HEK293 (cell line): ENCODE measurements at regions of chr19 and their contacts with region 1.

Region 1: GRCh38 chr19:19385108-19385899 is 20.2 kb upstream of the GATAD2A start:
- H3K4me3 ChIP-seq: peak overlapping the region; percentile 89
- H3K27ac ChIP-seq: peak overlapping the region; percentile 90
- H3K4me1 ChIP-seq: peaks cover 5% of the 10 kb centered on the region
- CTCF ChIP-seq: no peak

Region 2: DNA sequence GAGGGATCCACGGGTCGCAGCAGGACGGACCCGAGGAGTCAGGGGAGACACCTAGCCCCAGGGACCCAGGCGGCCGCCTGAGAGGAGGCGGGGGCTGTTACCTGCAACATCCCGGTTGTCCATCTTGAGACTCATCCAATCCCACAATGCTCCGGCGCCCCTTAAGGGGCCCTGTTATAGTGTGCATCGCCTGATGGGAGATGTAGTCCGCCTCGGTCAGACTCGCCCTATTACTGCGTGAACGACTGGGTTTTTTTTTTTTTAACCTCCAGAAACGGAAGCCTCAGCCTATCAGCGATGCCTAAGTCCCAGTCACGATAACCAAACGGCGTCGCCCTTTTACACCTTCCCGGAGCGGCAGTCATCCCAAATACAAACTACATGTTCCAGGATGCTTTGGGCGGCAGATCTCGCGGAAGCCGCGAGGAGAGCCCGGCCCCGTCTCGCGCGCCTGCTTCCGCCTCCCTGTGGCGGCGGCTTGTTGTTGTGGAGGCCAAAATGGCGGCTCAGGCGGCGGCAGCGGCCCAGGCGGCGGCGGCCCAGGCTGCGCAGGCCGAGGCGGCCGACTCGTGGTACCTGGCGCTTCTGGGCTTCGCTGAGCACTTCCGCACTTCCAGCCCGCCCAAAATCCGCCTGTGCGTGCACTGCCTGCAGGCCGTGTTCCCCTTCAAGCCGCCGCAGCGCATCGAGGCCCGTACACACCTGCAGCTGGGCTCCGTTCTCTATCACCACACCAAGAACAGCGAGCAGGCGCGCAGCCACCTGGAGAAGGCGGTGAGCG is 64.8 kb before region 1 on chr19 and contains the starts of genes MAU2 and SUGP1:
- CTCF ChIA-PET with region 1: no interaction called
- POLR2A ChIA-PET with region 1: no interaction called
- H3K4me3 ChIP-seq: peak within 1 kb of the TSS; percentile 100
- H3K27ac ChIP-seq: peak within 1 kb of the TSS; percentile 90
- H3K4me1 ChIP-seq: peaks cover 3% of the 10 kb centered on the region; the same call in 1 of the 2 replicates
- CTCF ChIP-seq: peak; percentile 37; the same call in 1 of the 2 replicates

Region 3: GRCh38 chr19:19354932-19355331 is 30.4 kb before region 1 on chr19:
- CTCF ChIA-PET with region 1: no interaction called
- POLR2A ChIA-PET with region 1: no interaction called
- H3K4me3 ChIP-seq: no peak overlapping the region
- H3K27ac ChIP-seq: no peak overlapping the region
- H3K4me1 ChIP-seq: no peaks in the 10 kb centered on the region
- CTCF ChIP-seq: no peak

Region 4: GRCh38 chr19:19374962-19375823 is 10.1 kb before region 1 on chr19:
- CTCF ChIA-PET with region 1: no interaction called
- POLR2A ChIA-PET with region 1: interaction called, 11 read pairs
- H3K4me3 ChIP-seq: no peak overlapping the region
- H3K27ac ChIP-seq: no peak overlapping the region
- H3K4me1 ChIP-seq: peaks cover 4% of the 10 kb centered on the region; the same call in 1 of the 2 replicates
- CTCF ChIP-seq: no peak